ENCODE measurements at regions of chr9 and their contacts with region 1.

Region 1: DNA sequence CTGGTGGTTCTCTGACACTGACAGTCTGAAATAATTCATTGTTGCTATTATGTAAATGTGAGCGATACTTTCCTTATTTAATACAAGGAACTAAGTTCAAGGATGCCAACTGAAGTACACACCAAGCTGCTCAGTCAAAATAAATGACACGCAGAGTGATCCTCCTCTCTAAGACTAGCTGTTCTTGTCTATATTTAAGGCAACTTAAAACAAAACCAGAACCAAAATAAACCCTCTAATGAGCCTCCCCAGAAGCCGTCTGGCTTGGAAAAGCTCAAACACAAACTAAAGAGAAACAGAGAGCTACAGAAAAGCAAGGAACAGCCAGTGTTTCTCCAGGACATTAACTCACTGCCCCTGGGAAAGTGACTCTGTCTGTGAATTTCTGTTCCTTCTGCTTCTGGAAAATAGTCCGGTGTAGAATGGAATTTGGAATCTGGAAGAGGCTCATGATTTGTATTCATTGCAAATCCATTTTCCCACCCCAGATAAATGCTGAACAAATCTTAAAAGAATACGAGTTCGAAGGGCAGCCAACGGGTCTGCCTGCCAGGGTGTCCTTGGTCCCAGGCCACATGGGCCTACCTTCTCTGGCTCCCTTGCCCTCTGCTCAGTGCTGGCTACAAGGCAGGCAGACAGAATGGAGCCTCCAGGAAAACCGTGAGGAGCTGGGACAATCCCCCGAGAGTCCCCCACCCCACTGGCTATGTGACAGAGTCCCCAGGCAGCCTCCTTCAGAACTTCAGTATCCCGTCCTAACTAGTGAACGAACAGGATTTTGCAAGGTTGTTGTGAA is 14.8 kb downstream of the GGTA1 start:
- DNase-seq: no peak
- H3K4me3 ChIP-seq: peak overlapping the region in 1 of 2 donors; percentile 8
- H3K27ac ChIP-seq: peak overlapping the region; percentile 87 to 88
- H3K4me1 ChIP-seq: peaks cover 0 to 82% (median 69%) of the 10 kb centered on the region in 4 donors
- H3K27me3 ChIP-seq: no peaks in the 10 kb centered on the region
- CTCF ChIP-seq: no peak

Region 2: DNA sequence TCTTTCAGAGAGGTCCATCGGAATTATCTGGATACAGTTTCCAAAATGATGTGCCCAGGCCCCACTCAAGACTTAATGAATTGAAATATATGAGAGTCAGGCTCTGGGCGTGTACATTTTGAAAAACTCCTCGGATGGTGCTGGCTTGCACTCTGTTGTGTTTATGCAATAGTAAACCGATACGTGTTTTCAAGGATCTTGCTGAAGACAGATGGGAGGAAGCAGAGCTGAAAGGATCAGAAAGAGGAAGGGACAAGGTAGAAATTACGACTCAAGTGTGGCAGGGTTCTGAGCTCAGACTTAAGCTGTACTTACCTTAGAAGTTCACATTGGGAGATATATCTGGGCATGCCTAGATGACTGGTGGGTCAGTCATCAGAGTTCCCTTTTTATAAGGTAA is 101.1 kb before region 1 on chr9:
- intact Hi-C with region 1: no loop called
- DNase-seq: no peak
- H3K4me3 ChIP-seq: no peak overlapping the region
- H3K27ac ChIP-seq: no peak overlapping the region
- H3K4me1 ChIP-seq: no peaks in the 10 kb centered on the region
- H3K27me3 ChIP-seq: no peaks in the 10 kb centered on the region
- CTCF ChIP-seq: no peak

Region 3: GRCh38 chr9:121510766-121511550 is 26.1 kb after region 1 on chr9:
- intact Hi-C with region 1: no loop called
- DNase-seq: peak in 1 of 2 donors; percentile 68
- H3K4me3 ChIP-seq: no peak overlapping the region
- H3K27ac ChIP-seq: peak overlapping the region; percentile 33 to 71
- H3K4me1 ChIP-seq: peaks cover 0 to 23% (median 13%) of the 10 kb centered on the region in 4 donors
- H3K27me3 ChIP-seq: no peaks in the 10 kb centered on the region
- CTCF ChIP-seq: no peak

Region 4: GRCh38 chr9:121529237-121529987 is 44.6 kb after region 1 on chr9:
- intact Hi-C with region 1: loop called (anchors 1 kb)
- DNase-seq: peak; percentile 97
- H3K4me3 ChIP-seq: no peak overlapping the region
- H3K27ac ChIP-seq: peak overlapping the region; percentile 48 to 54
- H3K4me1 ChIP-seq: peaks cover 0 to 15% (median 8%) of the 10 kb centered on the region in 4 donors
- H3K27me3 ChIP-seq: no peaks in the 10 kb centered on the region
- CTCF ChIP-seq: no peak